Breast epithelium (tissue), 4 donors: ENCODE measurements at regions of chr6 and their contacts with region 1.

Region 1: GRCh38 chr6:132742495-132742894 is 15.2 kb downstream of the VNN2 start:
- DNase-seq: no peak
- H3K4me3 ChIP-seq: no peak overlapping the region
- H3K27ac ChIP-seq: no peak overlapping the region
- H3K4me1 ChIP-seq: no peaks in the 10 kb centered on the region
- H3K27me3 ChIP-seq: no peaks in the 10 kb centered on the region
- CTCF ChIP-seq: no peak
- POLR2A ChIP-seq: no peak

Region 2: DNA sequence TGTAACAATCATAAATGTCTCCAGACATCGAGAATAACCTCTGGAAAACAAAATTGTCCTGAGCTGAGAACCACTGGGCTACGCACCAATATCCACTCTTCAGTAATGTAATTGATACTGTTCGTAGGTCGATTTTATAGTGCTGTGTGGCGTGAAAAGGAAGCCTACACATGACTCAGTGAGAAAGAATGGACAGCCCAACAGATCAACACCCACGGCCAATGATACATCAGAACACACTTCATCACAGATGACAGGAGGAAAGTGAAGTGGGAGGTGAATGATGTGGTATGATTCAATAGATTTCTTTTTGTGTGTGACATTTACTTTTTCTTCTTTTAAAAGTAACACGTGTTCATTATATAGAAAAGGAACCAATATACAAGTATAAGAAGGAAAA is 165.4 kb after region 1 on chr6:
- intact Hi-C with region 1: no loop called
- DNase-seq: no peak
- H3K4me3 ChIP-seq: no peak overlapping the region
- H3K27ac ChIP-seq: no peak overlapping the region
- H3K4me1 ChIP-seq: no peaks in the 10 kb centered on the region
- H3K27me3 ChIP-seq: no peaks in the 10 kb centered on the region
- CTCF ChIP-seq: no peak
- POLR2A ChIP-seq: no peak

Region 3: DNA sequence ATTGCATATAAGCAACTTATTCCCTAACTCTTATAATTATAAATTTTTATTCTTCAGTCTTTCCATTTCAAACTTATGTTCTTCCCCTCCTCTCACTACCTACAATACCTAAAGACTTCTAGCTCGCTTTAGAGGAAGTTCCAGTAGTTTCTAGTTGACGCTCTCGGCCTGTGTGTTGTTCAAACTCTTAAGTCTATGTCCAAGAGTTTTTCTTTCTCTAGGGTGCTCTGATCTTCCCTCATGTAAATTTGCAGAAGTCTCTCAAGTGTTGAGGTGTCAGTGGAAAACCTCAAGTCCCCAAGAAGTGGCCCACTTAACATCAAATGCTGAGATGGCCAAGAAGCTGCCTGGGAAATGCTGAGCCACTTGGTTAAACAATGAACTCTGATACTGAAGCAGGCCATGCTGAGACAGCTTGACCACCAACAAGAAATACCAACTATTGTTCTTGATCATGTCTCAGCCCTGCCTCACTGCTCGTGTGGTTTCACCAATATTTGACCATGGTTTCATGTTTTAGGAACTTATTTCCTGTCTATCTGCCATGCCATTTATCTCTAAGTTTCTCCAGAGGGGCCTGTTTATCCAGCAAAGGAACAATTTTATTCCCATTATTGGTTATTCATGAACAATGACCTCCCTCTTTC is 1045.5 kb after region 1 on chr6:
- intact Hi-C with region 1: loop called (anchors 5 kb)
- DNase-seq: no peak
- H3K4me3 ChIP-seq: no peak overlapping the region
- H3K27ac ChIP-seq: no peak overlapping the region
- H3K4me1 ChIP-seq: no peaks in the 10 kb centered on the region
- H3K27me3 ChIP-seq: no peaks in the 10 kb centered on the region
- CTCF ChIP-seq: no peak
- POLR2A ChIP-seq: no peak